A673 (cell line): ENCODE measurements at regions of chr9 and their contacts with region 1.

Region 1: DNA sequence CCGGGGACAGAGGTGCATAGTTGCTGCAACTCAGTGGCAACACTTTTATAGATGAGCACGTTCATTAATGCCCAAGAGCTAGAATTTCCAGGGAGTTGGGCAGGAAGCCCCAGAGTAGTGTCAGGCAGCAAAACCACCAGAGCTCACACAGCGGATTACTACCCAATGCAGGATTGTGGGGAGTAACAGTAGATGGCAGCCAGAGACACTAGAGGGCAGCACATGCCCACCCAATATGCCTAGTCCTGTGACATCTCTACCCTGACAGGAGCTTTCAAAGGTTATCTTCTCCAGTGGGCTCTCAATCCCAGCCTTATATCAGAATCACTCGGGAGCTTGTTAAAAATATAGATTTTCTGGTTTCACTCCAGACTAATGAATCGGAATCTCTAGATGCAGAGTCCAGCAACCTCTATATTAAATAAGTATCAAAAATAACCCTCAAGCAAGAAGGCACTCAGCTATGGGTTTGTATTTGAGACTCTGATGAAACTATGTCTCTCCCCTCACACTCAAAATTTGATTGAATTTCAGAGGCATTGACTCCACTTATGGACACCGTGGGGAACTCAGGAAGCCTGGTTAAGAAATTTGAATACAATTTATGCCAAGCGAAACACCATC is 58.4 kb upstream of the PHF24 start:
- DNase-seq: peak; percentile 85
- H3K4me3 ChIP-seq: no peak overlapping the region
- H3K27ac ChIP-seq: no peak overlapping the region
- H3K4me1 ChIP-seq: no peaks in the 10 kb centered on the region
- H3K27me3 ChIP-seq: peaks cover 42% of the 10 kb centered on the region
- CTCF ChIP-seq: peak; percentile 84

Region 2: GRCh38 chr9:33426843-33427293 is 1472.8 kb before region 1 on chr9:
- CTCF ChIA-PET with region 1: no interaction called
- POLR2A ChIA-PET with region 1: no interaction called
- intact Hi-C with region 1: no loop called
- DNase-seq: no peak
- H3K4me3 ChIP-seq: no peak overlapping the region
- H3K27ac ChIP-seq: no peak overlapping the region
- H3K4me1 ChIP-seq: no peaks in the 10 kb centered on the region
- H3K27me3 ChIP-seq: no peaks in the 10 kb centered on the region
- CTCF ChIP-seq: no peak

Region 3: GRCh38 chr9:34989003-34989945 is 89.6 kb after region 1 on chr9 and contains the start of gene DNAJB5:
- CTCF ChIA-PET with region 1: interaction called, 43 read pairs
- POLR2A ChIA-PET with region 1: no interaction called
- intact Hi-C with region 1: loop called (anchors 2 kb)
- DNase-seq: peak; percentile 100
- H3K4me3 ChIP-seq: peak within 1 kb of the TSS; percentile 85
- H3K27ac ChIP-seq: peak within 1 kb of the TSS; percentile 86
- H3K4me1 ChIP-seq: peaks cover 61% of the 10 kb centered on the region
- H3K27me3 ChIP-seq: no peaks in the 10 kb centered on the region
- CTCF ChIP-seq: no peak
- total RNA-seq, gene DNAJB5: 11.9 and 13.0 TPM in 2 replicates

Region 4: DNA sequence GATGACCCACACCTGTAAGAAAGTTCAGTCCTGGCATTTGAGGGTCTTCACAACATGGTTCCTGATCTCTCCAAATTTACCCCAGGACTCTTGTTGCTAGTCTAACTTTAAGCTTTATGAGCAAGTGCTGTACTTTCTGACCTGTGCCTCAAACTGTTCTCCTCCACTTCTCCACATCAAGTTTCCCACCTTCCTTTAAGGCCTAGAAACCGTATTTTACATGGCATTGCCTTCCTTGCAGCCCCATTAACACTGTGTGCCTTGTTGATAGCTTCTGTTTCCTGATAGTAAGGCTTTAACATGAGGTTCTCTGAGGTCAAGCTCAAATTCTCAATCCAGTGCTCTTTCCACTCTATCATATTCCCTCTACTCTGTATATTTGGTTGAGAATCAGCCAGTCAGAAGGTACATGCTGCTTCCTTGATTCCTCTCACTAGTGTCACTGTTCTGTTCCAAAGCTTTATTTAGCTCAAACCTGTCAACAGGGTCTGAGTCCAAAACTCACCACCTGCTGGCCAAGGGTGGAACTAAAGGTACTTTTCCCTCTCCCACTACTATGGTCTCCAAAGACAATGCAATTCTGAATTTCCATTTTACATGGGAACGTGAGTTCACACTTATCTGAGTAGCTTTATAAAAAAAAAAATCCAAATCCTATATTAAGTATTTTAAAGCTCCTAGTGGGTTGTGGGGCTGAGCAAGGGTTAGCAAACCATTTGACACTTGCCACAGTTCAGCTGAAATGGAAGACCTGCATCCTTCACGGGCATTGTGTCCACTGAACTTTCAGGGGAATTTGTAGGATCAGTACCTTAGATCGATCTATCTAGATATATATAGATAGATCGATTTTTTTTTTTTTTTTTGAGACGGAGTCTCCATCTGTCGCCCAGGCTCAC is 151.7 kb after region 1 on chr9:
- CTCF ChIA-PET with region 1: interaction called, 61 read pairs
- POLR2A ChIA-PET with region 1: no interaction called
- intact Hi-C with region 1: loop called (anchors 2 kb)
- DNase-seq: peak; percentile 71
- H3K4me3 ChIP-seq: no peak overlapping the region
- H3K27ac ChIP-seq: no peak overlapping the region
- H3K4me1 ChIP-seq: no peaks in the 10 kb centered on the region
- H3K27me3 ChIP-seq: no peaks in the 10 kb centered on the region
- CTCF ChIP-seq: peak; percentile 72

Region 5: GRCh38 chr9:35096035-35096849 is 196.6 kb after region 1 on chr9 and contains the start of gene PIGO:
- CTCF ChIA-PET with region 1: interaction called, 9 read pairs
- POLR2A ChIA-PET with region 1: no interaction called
- intact Hi-C with region 1: loop called (anchors 1 kb)
- DNase-seq: peak; percentile 90
- H3K4me3 ChIP-seq: peak within 1 kb of the TSS; percentile 96
- H3K27ac ChIP-seq: peak within 1 kb of the TSS; percentile 99
- H3K4me1 ChIP-seq: peaks cover 7% of the 10 kb centered on the region
- H3K27me3 ChIP-seq: no peaks in the 10 kb centered on the region
- CTCF ChIP-seq: peak; percentile 77
- total RNA-seq, gene PIGO: 32.9 and 34.3 TPM in 2 replicates